ENCODE measurements at regions of chr14 and their contacts with region 1.

Region 1: DNA sequence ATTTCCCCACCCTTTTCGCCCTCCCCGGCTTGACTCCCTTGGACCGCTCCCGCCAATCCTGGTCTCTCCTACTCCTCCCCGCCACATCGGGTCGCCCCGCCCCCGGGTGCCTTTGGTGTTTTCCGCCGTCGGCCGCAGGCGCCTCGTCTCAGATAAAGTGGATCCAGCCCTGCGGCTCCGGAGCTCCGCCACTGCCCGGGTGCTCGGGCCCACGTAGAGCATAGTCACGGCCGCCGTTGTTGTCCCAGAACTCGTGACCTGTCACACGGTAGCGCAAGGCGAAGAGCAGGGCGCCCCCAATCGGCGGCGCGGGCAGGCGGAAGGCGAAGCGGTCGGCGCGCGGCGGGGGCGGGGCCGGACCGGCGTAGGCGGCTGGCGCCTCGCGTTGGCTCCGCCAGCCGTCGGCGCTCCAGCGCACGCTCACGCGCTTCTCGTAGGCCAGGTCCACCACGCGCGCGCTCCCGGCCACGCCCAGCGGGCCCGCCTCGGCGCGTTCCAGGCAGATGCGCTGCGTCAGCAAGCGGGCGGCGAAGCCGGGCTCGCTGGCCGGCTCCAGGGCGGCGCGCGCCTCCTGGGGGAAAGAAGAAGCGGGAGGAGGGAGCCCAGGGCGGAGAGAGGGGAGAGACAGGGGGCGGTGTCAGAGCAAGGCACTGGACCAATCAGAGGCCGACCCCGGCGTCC is 1.2 kb downstream of the PPP1R3E start:
- DNase-seq: peak; percentile 99

Region 2: GRCh38 chr14:22836301-22837113 is 464.9 kb before region 1 on chr14 and contains the start of gene MMP14:
- intact Hi-C with region 1: no loop called
- DNase-seq: no peak
- total RNA-seq, gene MMP14: 26.1 TPM

Region 3: DNA sequence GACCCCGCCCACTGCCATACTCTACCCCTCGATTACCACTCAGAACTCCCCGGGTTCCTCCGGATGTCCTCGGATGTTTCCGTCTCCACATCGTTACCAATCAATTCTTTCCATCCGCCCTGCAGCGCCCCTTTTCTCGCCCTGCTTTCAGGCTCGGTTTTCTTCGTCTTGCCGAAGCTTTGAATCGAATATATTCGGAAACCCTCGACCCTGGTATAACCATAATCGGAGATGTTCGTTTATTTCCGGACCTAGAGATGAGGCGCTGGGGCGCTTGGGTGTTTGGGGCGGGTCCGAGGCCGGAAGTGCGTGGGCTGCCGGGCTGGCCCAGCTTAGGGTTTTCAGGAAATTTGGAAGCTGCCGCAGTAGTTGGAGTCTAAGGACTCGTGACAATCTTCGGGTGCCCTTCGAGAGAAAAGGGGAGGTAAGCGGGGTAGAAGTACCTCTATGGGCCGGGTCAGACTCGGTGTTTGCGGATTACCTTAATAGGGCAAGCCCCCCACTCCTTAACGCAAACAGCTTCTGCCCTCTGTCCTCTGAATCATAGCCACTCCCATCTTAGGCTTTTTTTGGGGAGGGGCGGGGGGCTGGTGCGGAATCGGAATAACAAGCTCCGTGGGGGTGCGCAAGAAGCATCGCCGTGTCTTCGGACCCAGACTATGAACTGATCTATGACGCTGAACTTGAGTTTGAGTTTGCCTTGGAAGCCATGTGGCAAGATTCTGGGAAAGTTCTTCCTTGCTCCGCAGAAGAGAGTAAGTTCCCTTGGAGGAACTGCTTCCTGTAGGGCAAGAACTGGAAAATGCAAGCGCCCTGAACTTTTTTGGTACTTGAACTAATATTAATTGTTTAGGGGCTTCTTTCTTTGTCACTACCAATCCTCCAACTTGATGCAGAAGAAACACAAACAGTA is 206.0 kb before region 1 on chr14 and contains the start of gene C14orf119:
- intact Hi-C with region 1: loop called (anchors 10 kb)
- DNase-seq: peak; percentile 100
- total RNA-seq, gene C14orf119: 28.9 TPM

Region 4: DNA sequence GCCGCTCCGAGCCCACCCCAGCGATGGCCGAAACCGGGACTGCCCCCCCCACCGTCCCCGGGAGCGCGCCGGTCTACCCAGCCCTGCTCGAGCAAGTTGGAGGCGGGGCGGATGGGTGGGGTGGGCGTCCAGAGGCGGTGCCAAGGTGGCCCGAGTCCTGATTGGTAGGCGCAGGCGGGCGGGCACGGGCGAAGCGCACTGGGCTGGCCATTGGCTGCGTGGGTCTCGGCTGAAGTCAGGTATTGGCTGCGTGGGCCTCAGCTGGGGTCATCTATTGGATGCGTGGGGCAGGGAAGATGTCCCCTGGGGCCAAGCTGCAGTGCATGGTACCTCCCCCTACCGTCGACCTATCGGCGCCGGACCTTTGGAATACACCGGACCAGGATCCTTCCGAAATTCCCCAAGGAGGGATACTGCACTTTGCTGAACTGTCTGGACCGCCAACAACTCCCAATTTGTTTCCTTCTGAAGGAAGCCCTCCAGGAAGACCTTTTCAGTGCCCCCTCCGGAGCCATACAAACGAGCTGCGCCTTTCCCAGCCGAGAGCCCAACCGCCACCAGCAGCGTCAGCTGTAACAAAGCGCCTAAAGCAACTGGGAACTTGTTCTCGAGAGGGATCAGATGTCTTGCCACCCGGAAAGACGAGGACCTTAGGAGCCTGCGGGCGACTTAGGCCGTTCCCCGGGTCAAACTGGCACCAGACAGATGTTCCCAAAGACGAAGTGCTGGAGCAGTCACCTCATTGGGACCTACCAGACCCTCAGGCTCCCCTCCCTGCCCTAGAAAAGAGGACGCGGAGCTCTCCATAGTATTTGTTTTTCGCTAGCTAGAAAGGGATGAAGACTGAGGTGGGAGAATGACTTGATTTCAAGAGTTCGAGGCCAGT is 15.2 kb before region 1 on chr14 and contains the start of gene HOMEZ:
- intact Hi-C with region 1: loop called (anchors 2 kb)
- DNase-seq: peak; percentile 99
- total RNA-seq, gene HOMEZ: 9.0 TPM